ENCODE measurements at regions of chr19 and their contacts with region 1.

Region 1: DNA sequence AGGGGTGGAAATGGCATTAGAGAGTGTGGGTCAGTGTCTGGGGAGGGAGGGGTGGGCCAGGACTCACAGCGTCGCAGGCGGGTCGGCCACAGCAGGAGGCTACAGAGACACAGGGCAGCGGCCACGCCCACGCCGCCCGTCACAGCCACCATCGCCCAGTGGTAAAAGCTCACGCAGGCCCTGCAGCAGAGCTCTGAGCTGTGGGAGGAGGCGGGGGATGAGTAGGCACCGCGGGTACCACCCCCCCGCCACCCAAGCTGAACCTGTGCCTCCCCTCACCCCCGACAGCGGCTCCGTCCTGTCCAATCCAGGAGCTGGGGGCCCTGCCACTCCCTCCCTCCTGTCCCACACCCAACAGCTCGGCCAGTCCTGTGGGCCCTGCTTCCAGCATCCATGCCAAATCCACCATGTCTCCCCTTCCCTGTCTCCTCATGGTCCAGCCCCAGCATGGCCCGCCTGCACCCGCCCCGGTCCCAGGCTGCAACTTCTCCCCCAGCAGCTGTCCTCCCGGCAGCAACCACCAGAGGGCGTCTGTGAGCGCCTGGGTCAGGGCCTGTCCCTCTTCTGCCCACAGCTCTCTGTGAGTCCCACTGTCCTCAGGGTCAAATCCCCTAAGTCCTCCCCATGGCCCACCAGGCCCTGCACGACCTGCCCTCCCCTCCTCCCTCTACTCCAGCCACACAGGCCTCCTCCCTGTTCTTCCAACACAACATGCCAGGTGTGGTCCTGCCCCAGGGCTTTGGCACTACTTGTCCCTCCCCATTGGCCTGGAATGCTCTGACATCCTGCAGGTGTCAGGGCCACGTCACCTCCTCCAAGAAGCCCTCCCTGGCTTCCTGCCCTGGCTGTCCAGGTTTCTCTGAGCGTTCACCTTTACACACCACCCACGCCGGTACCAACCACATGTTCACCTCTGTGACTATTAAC is 6.0 kb downstream of the TEKTIP1 start:
- DNase-seq: peak; percentile 85
- ATAC-seq: peak; percentile 87
- H3K4me3 Mint-ChIP-seq: no peak overlapping the region
- H3K27ac Mint-ChIP-seq: peak overlapping the region; percentile 73
- H3K4me1 Mint-ChIP-seq: peaks cover 12% of the 10 kb centered on the region
- H3K27me3 Mint-ChIP-seq: no peaks in the 10 kb centered on the region
- CTCF ChIP-seq: peak; percentile 96

Region 2: GRCh38 chr19:3466635-3467034 is 78.4 kb before region 1 on chr19:
- CTCF ChIA-PET with region 1: no interaction called
- POLR2A ChIA-PET with region 1: no interaction called
- intact Hi-C with region 1: no loop called
- DNase-seq: no peak
- ATAC-seq: no peak
- H3K4me3 Mint-ChIP-seq: no peak overlapping the region
- H3K27ac Mint-ChIP-seq: no peak overlapping the region
- H3K4me1 Mint-ChIP-seq: no peaks in the 10 kb centered on the region
- H3K27me3 Mint-ChIP-seq: no peaks in the 10 kb centered on the region
- CTCF ChIP-seq: no peak

Region 3: DNA sequence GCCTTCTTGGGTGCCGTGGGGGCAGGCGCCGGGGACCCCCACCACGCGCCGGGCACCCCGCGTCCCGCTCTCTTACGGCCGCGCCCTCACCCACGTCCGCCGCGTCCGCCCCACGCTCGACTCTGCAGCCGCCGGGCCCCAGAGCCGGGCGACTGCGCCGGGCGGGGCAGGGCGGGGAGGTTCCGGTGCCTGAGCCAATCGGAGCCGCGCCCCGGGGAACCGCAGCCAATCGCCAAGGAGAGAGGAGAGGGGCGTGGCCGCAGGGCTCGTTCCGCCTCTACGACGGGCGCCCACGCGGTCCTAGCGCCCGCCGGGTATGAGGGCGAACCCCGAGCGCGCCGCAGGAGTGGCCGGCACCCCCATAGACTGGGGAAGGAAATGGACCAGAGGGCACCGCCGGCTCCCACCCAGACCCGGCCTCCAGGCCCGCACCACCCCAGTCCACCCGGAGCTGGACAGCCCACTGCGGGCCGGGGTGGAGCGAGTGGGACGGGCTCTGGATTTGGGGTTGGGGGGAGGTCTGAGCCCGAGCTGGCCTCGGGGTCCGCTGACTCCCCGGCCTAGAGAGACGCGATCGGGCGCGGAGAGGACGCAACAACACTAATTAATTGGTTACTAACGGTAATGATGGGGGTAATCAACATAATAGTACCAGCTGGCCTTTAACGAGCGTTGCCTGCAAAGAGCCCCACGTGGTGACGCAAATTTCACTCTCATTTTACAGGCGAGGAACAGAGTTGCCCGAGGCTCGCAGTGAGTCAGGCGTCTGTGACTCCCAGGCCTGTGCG is 12.7 kb after region 1 on chr19 and contains the start of gene MFSD12:
- CTCF ChIA-PET with region 1: interaction called, 56 read pairs
- POLR2A ChIA-PET with region 1: interaction called, 8 read pairs
- intact Hi-C with region 1: no loop called
- DNase-seq: peak; percentile 96
- ATAC-seq: peak; percentile 91
- H3K4me3 Mint-ChIP-seq: peak within 1 kb of the TSS; percentile 92
- H3K27ac Mint-ChIP-seq: peak within 1 kb of the TSS; percentile 87
- H3K4me1 Mint-ChIP-seq: peaks cover 26% of the 10 kb centered on the region
- H3K27me3 Mint-ChIP-seq: no peaks in the 10 kb centered on the region
- CTCF ChIP-seq: no peak
- total RNA-seq, gene MFSD12: 62.4 to 63.5 TPM

Region 4: DNA sequence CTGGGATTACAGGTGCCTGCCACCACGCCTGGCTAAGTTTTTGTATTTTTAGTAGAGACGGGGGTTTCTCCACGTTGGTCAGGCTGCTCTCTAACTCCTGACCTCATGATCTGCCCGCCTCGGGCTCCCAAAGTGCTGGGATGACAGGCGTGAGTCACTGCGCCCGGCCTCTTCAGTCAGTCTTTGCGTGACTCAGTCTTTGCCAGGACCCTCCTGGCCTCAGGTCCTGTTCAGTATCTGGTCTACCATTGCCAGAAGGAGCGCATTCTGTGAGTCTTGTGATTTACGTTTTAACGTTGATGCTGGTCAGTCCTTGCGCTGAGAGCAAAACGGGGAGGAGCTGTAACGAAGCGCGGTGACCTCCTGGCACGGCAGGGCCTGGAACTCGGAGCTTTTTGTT is 20.1 kb after region 1 on chr19:
- CTCF ChIA-PET with region 1: interaction called, 13 read pairs
- POLR2A ChIA-PET with region 1: no interaction called
- intact Hi-C with region 1: no loop called
- DNase-seq: no peak
- ATAC-seq: no peak
- H3K4me3 Mint-ChIP-seq: no peak overlapping the region
- H3K27ac Mint-ChIP-seq: no peak overlapping the region
- H3K4me1 Mint-ChIP-seq: no peaks in the 10 kb centered on the region
- H3K27me3 Mint-ChIP-seq: no peaks in the 10 kb centered on the region
- CTCF ChIP-seq: no peak

Region 5: DNA sequence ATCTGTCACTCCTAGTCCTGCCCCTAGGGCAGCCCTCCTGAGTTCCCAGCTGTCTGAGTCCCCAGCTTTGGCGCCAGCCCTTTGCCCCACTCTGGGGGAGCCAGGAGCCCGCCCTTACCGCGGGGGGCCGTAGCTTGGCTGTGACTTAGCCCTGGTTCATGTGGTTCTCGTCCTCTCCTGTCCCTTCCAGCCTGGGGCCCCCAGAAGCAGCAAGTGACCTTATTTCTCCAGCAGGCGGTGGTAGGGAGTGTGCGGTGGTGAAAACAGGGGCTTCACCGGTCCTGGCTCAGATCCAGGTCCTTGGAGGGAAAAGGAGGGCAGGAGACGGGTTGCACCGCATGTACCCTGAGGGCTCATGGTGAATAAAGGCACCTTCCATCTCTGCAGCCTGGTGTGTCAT is 48.2 kb after region 1 on chr19:
- CTCF ChIA-PET with region 1: interaction called, 14 read pairs
- POLR2A ChIA-PET with region 1: no interaction called
- intact Hi-C with region 1: no loop called
- DNase-seq: peak; percentile 22
- ATAC-seq: peak; percentile 49
- H3K4me3 Mint-ChIP-seq: no peak overlapping the region
- H3K27ac Mint-ChIP-seq: no peak overlapping the region
- H3K4me1 Mint-ChIP-seq: no peaks in the 10 kb centered on the region
- H3K27me3 Mint-ChIP-seq: no peaks in the 10 kb centered on the region
- CTCF ChIP-seq: no peak

Region 6: DNA sequence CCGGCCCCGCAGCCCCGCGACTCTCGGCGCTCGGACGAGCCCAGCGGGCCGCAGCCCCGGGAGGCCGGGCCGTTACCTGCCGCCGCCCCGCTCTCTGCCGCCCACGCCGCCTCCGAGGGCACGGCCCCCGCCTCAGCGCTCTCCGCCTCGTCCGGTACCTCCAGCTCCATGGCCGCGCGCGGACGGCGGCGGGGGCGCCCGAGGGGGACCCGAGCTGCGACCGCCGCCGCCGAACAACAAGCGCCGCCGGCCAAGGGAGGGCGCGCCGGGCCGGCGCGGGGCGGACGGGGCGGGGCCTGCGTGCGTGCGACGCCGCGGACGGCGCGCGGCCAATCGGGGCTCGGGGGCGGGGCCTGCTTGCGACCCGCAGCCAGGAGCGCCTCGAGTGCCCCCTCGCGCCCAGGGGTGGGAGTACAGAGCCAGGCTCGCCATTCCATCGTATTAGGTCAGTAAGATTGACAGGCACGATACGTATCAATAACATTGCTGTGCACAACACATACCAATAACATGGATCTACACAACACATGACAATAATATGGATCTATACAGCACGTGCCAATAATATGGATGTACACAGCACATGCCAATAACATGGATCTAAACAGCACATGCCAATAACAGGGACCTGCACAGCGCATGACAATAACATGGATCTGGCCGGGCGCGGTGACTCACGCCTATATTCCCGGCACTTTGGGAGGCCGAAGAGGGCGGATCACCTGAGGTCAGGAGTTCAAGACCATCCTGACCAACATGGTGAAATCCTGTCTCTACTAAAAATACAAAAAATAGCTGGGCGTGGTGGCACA is 155.4 kb after region 1 on chr19 and contains the start of gene PIP5K1C:
- CTCF ChIA-PET with region 1: no interaction called
- POLR2A ChIA-PET with region 1: no interaction called
- intact Hi-C with region 1: no loop called
- DNase-seq: peak; percentile 95
- ATAC-seq: peak; percentile 99
- H3K4me3 Mint-ChIP-seq: peak within 1 kb of the TSS; percentile 92
- H3K27ac Mint-ChIP-seq: peak within 1 kb of the TSS; percentile 79
- H3K4me1 Mint-ChIP-seq: peaks cover 15% of the 10 kb centered on the region
- H3K27me3 Mint-ChIP-seq: peaks cover 2% of the 10 kb centered on the region
- CTCF ChIP-seq: peak; percentile 76
- total RNA-seq, gene PIP5K1C: 20.4 to 22.2 TPM

Measured in activated CD8-positive, alpha-beta T cell treated with anti-CD3 and anti-CD28 coated beads for 36 hours (primary cell).